ENCODE measurements at regions of chr6 and their contacts with region 1.

Region 1: GRCh38 chr6:25070547-25071366 is 135.0 kb upstream of the RIPOR2 start:
- DNase-seq: peak; percentile 81
- H3K4me3 ChIP-seq: no peak overlapping the region
- H3K27ac ChIP-seq: no peak overlapping the region
- H3K4me1 ChIP-seq: no peaks in the 10 kb centered on the region
- H3K27me3 ChIP-seq: no peaks in the 10 kb centered on the region
- CTCF ChIP-seq: peak; percentile 79 to 89
- POLR2A ChIP-seq: no peak

Region 2: DNA sequence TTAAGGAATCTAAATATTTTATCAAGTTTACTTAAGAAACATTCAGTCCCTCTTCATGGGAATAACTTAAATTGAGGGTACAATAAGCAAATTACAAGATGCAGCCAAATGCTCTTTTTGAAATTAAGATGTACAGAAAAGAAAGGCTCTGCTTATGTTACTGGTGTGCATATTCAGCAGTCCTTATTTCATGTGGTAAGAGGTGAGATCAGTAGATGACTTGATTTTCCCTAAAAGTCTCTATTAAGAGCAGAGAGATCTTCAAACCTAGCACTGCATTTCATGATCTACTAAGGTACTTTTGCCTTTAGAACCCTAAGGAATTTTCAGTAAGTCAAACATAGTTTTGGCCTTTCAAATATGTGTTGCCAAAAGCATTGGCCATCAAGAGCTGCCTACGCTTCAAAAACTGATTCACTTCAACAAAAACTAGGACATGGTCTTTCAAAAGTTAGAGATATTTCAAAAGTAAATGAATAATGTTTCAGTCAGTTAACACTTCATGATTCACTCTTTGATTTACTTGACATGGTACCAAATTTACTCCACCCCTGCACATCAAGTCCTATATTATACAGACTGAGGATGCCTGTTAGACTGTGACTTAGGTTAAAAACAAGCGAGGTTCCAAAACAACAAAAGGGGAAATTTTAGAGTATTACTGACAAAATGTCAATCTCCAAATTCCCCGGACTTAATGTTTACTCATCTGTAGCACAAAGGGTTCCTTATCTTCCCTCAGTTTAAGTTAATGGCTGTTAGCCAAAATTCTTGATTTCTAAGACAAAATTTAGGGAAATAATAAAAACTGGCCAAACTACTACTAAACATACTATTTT is 371.0 kb before region 1 on chr6:
- CTCF ChIA-PET with region 1: no interaction called
- POLR2A ChIA-PET with region 1: no interaction called
- dilution Hi-C with region 1: no loop called
- intact Hi-C with region 1: loop called (anchors 5 kb)
- DNase-seq: peak; percentile 51
- H3K4me3 ChIP-seq: no peak overlapping the region
- H3K27ac ChIP-seq: no peak overlapping the region
- H3K4me1 ChIP-seq: no peaks in the 10 kb centered on the region
- H3K27me3 ChIP-seq: no peaks in the 10 kb centered on the region
- CTCF ChIP-seq: no peak
- POLR2A ChIP-seq: no peak

Region 3: DNA sequence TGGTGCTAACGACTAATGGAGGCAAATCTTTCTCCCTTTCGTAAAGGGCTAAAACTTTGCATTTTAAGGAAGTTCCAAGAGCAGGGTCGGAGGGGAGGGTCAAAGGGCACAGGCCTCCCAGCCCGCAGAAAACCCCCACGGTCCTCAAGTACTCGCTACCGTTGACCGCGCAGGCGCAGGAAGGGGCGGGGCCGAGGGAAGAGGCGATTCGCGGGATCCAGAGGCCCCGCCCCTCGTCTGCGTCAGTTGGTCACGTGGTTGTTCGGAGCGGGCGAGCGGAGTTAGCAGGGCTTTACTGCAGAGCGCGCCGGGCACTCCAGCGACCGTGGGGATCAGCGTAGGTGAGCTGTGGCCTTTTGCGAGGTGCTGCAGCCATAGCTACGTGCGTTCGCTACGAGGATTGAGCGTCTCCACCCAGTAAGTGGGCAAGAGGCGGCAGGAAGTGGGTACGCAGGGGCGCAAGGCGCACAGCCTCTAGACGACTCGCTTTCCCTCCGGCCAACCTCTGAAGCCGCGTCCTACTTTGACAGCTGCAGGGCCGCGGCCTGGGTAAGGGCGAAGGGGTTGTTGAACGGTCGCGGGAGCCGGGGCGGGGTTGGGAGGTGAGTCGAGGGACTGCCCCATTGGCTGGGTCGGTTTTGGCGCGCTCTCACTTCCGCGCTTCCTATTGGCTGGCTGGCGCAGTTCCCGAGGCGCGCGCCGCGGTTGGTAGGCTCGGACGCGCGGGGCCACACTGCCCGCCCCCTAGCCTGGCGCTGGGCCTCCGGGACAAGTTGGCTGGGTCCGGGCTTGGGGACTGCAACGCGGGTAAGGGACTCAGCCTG is 295.8 kb before region 1 on chr6 and contains the start of gene GMNN:
- CTCF ChIA-PET with region 1: interaction called, 3 read pairs
- POLR2A ChIA-PET with region 1: no interaction called
- dilution Hi-C with region 1: no loop called
- intact Hi-C with region 1: loop called (anchors 2 kb)
- DNase-seq: peak; percentile 94
- H3K4me3 ChIP-seq: peak within 1 kb of the TSS; percentile 41 to 99 (median 82)
- H3K27ac ChIP-seq: peak within 1 kb of the TSS; percentile 54
- H3K4me1 ChIP-seq: peaks cover 23% of the 10 kb centered on the region
- H3K27me3 ChIP-seq: no peaks in the 10 kb centered on the region
- CTCF ChIP-seq: no peak
- POLR2A ChIP-seq: peak; percentile 85
- total RNA-seq, gene GMNN: 51.9 and 52.6 TPM in 2 replicates

Region 4: DNA sequence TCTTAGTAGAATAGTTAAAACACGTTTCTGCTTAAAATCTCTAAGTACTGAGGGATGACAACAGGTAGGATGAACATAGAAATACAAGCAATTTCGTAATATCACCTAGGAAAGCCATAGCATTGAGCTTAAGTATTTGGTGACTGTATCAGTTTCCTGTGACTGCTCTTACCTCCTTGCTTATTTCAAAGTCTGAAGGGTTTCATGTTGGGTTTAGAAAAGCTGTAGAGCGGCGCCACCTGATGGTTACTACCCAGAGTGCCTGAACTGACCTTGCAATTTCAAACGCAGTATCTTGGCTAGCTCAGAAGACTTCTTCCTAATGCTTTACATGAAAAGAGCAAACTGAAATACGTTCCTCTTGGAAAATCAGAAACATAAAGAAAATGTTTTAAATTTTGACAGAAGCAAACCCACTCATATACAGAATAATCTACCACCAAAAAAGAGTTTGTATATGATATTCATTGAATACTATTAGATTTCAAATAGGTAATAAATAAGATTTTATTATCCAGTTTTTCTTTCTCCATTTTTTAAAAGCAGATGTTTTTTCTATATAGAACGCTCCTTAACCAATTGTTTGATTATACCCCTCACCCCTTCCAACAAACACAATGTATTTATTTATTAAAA is 52.7 kb before region 1 on chr6:
- CTCF ChIA-PET with region 1: interaction called, 8 read pairs
- POLR2A ChIA-PET with region 1: no interaction called
- dilution Hi-C with region 1: no loop called
- intact Hi-C with region 1: loop called (anchors 1 kb)
- DNase-seq: peak; percentile 66
- H3K4me3 ChIP-seq: no peak overlapping the region
- H3K27ac ChIP-seq: no peak overlapping the region
- H3K4me1 ChIP-seq: no peaks in the 10 kb centered on the region
- H3K27me3 ChIP-seq: no peaks in the 10 kb centered on the region
- CTCF ChIP-seq: peak; percentile 39 to 40
- POLR2A ChIP-seq: no peak

Region 5: DNA sequence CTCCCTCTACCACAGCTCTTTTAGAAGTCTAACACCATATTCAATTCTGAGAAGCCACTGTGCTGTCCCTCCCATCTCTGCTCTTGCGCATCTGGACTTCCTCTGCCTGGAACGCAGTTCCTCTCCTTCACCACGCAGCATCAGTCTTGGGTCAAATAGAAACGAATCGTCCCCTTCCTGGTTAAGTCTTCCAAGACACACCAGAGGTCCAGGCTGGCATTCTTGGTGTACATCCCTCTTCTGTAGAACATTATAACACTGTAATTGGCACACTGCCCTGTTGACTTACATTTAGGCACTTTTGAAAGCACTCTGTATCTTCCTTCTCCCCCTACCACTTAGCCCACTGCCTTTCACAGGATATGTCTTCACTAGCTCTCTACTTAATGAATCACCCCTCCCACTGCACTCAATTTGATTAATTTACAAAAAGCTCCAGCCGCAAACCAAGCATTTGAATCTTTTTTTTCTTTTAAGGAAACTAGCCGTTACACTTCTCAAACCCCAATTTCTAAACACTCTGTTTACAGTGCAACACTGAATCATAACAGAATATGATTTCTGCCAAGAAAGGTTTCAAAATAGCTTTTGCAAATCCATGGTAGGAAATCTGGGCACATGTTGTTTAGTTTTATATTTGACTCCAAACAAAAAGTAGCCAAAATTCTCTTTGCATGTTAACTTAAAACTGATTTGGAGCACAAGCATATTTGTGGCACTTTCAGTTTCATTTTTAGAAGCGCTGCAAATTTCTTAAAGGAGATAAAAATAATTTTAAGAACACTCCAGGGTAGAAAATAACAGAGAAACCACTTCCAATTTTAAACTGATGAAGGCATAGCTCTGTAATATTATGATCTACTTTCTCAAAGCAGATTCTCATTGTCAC is 67.7 kb after region 1 on chr6:
- CTCF ChIA-PET with region 1: no interaction called
- POLR2A ChIA-PET with region 1: no interaction called
- dilution Hi-C with region 1: no loop called
- intact Hi-C with region 1: loop called (anchors 1 kb)
- DNase-seq: peak; percentile 84
- H3K4me3 ChIP-seq: peak overlapping the region; percentile 29 to 71 (median 43)
- H3K27ac ChIP-seq: peak overlapping the region; percentile 45
- H3K4me1 ChIP-seq: peaks cover 13% of the 10 kb centered on the region
- H3K27me3 ChIP-seq: no peaks in the 10 kb centered on the region
- CTCF ChIP-seq: peak in 1 of 2 donors; percentile 11
- POLR2A ChIP-seq: no peak